ENCODE measurements at regions of chr10 and their contacts with region 1.

Region 1: DNA sequence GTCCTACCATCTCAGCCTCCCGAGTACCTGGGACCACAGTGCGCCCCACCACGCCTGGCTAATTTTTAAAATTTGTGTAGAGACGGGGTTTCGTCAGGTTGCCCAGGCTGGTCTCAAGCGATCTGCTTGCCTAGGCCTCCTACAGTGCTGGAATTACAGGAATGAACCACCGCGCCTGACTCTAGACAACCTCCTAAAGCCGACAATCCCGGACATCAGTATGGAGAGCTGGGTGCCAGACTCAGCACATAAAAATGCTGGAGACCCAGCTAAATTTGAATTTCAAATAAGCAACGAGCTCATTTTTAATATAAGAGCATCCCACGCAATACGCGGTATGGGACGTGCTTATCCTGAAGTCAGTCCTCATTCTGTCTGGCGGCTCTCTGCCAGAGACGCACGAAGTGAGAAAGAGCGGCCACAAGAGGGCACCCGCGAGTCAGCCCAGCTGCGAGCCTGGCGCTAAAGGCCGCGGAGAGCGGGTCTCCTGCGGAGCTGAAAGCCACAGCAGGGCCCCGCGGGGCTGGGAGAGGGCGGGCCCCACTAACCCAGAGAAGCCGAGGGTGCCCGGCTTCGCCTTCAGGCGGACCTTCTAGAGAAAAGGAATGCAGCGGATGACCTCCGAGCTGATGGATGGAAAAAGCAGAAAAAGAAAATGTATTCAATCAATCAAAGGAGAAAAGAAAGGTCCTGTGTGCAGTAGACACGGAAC is 7.0 kb downstream of the CALY start:
- DNase-seq: peak; percentile 77
- H3K4me3 Mint-ChIP-seq: peak overlapping the region; percentile 64
- H3K27ac Mint-ChIP-seq: no peak overlapping the region
- H3K4me1 Mint-ChIP-seq: peaks cover 3% of the 10 kb centered on the region
- H3K27me3 Mint-ChIP-seq: peaks cover 72% of the 10 kb centered on the region

Region 2: DNA sequence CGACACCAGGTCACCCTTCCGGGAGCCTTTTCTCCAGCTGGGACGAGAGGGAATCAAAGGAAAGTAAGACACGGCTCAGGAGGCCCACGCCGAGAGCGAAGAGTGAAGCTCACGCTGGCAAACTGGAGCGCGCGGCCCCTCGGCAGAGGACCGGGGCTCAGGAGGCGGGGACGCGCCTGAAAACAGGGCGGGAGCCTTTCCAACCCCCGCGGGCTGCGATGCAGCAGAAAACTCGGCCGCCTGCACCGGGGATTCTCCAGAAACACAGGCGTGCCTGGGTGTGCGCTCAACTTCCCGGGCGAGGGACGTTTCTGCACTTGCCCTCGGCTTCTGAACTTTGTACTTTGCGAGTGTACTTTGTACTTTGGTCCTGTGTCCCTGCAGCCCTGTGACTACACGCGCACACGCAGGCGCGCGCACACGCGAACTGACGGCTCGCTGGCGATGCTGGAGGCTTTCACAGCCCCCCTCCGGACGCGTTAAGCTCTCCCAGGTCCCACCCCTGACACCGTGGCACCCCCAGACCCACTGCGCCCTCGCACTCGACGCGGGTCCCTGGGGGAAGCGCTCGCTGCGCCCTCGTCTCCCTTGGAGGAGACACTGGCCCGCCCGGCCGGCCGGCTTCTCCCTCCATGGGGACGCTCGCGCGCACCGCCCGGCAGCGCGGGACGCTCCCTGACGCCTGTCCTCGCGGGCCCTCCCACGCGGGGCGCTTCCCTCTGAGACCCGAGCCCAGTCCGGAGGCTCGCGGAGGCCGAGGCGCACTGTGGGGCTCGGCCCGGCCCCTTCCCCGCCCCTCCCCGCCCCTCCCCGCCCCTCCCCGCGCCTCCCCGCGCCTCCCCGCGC is 48.8 kb after region 1 on chr10:
- intact Hi-C with region 1: loop called (anchors 2 kb)
- DNase-seq: peak; percentile 51
- H3K4me3 Mint-ChIP-seq: peak overlapping the region; percentile 79
- H3K27ac Mint-ChIP-seq: peak overlapping the region; percentile 44
- H3K4me1 Mint-ChIP-seq: peaks cover 11% of the 10 kb centered on the region
- H3K27me3 Mint-ChIP-seq: peaks cover 16% of the 10 kb centered on the region

Region 3: GRCh38 chr10:133520155-133520738 is 190.6 kb after region 1 on chr10:
- intact Hi-C with region 1: loop called (anchors 1 kb)
- DNase-seq: peak; percentile 80
- H3K4me3 Mint-ChIP-seq: peak overlapping the region; percentile 58
- H3K27ac Mint-ChIP-seq: no peak overlapping the region
- H3K4me1 Mint-ChIP-seq: peaks cover 5% of the 10 kb centered on the region
- H3K27me3 Mint-ChIP-seq: peaks cover 39% of the 10 kb centered on the region

Region 4: GRCh38 chr10:133608855-133609254 is 279.2 kb after region 1 on chr10:
- intact Hi-C with region 1: loop called (anchors 5 kb)
- DNase-seq: no peak
- H3K4me3 Mint-ChIP-seq: no peak overlapping the region
- H3K27ac Mint-ChIP-seq: no peak overlapping the region
- H3K4me1 Mint-ChIP-seq: no peaks in the 10 kb centered on the region
- H3K27me3 Mint-ChIP-seq: peaks cover 11% of the 10 kb centered on the region